ENCODE measurements at regions of chr14 and their contacts with region 1.

Region 1: DNA sequence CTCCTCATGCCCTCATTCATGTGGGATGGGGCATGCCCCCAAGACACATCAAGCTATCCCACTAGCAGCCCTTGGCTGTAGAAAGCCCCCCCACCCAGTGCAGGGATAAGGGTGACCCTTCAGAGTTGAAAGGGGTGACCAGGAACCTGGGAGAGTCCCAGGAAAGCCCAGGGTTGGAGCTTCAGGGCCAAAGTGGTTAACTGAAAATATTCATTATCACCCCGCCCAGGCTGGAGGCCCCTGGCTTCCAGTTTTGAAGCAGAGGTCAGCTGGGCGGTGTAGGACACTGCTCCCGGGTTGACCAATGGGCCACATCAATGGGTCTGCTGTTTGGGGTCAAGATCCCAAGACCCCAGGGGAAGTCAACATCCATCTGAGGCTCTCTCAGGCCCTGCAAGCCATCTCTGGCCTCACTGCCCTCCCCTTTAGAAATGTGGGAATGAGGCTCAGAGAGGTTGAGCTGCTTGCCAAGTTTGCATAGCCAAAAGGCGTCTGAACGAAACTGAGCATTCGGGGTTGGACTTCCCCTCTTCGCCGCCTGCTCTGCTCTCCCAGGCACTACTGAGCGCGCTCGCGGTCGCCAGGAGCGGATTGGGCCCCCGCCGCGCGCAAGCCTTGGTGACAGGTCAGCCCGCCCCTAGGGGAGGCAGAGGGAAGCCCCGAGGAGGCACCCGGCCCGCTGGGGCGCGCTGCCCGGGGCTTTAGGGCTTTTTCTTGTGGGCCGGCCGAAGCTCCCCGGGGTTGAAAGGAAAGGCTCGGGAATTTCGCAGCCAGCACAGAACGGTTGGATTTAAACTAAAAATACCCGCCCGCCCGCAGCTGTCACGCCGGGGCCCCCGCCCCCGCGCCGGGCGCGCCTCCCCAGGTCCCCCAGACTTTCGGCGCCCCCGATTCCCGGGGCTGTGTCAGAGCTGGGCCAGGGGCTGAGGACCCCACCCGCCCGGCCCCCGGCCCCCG is 576 bp downstream of the SYNE3 start:
- DNase-seq: peak; percentile 93
- H3K4me3 Mint-ChIP-seq: peak overlapping the region; percentile 80
- H3K27ac Mint-ChIP-seq: peak overlapping the region; percentile 79
- H3K4me1 Mint-ChIP-seq: peaks cover 61% of the 10 kb centered on the region
- H3K27me3 Mint-ChIP-seq: no peaks in the 10 kb centered on the region

Region 2: GRCh38 chr14:95265106-95266094 is 250.5 kb before region 1 on chr14:
- CTCF ChIA-PET with region 1: no interaction called
- intact Hi-C with region 1: loop called (anchors 1 kb)
- DNase-seq: peak; percentile 79
- H3K4me3 Mint-ChIP-seq: no peak overlapping the region
- H3K27ac Mint-ChIP-seq: peak overlapping the region; percentile 56
- H3K4me1 Mint-ChIP-seq: peaks cover 36% of the 10 kb centered on the region
- H3K27me3 Mint-ChIP-seq: no peaks in the 10 kb centered on the region

Region 3: GRCh38 chr14:95442633-95443021 is 73.2 kb before region 1 on chr14:
- CTCF ChIA-PET with region 1: interaction called, 16 read pairs
- intact Hi-C with region 1: no loop called
- DNase-seq: peak; percentile 88
- H3K4me3 Mint-ChIP-seq: no peak overlapping the region
- H3K27ac Mint-ChIP-seq: peak overlapping the region; percentile 20
- H3K4me1 Mint-ChIP-seq: peaks cover 7% of the 10 kb centered on the region
- H3K27me3 Mint-ChIP-seq: no peaks in the 10 kb centered on the region

Region 4: DNA sequence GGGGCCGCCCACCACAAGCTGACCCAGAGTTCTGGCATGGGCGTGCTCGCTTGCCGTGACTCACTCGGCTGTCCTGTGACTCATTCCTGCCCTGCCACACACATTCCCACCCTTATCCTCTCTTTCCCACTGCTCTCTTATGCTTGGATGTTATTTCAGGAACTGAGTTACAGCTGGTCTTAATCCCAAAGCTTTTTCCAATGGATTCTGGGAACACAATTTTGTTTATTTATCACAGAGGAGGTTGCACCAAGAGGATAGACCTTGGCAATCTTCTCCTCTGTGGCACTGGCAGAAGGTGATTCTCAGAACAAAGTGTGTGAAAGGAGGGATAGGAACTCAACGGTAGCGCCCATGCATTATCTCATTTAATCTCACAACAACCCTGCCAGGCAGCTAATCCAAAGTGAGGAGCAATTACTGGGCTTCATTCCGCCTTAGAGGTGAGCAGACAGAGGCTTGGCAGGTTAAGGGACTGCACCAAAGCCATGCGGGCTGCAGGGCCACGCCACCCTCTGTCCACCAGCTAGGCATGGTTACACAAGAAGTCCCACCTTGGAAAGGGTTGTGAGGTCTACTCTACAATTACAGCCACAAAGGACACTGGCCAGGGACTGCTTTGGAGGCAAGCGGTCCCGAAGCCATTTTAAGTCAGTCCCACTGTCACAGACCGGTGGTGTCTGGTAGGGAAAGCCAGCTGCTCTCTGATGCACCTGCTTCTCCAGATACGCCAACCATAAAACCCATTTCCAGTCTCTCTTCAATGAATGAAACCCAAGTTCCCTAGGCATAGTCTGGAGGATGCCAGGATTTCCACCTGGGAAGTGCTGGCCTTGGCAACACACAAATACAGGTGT is 32.3 kb before region 1 on chr14:
- CTCF ChIA-PET with region 1: no interaction called
- intact Hi-C with region 1: loop called (anchors 5 kb)
- DNase-seq: no peak
- H3K4me3 Mint-ChIP-seq: no peak overlapping the region
- H3K27ac Mint-ChIP-seq: no peak overlapping the region
- H3K4me1 Mint-ChIP-seq: peaks cover 45% of the 10 kb centered on the region
- H3K27me3 Mint-ChIP-seq: no peaks in the 10 kb centered on the region

Region 5: GRCh38 chr14:95495538-95496025 is 20.3 kb before region 1 on chr14:
- CTCF ChIA-PET with region 1: interaction called, 4 read pairs
- intact Hi-C with region 1: loop called (anchors 1 kb)
- DNase-seq: peak; percentile 66
- H3K4me3 Mint-ChIP-seq: no peak overlapping the region
- H3K27ac Mint-ChIP-seq: peak overlapping the region; percentile 56
- H3K4me1 Mint-ChIP-seq: peaks cover 52% of the 10 kb centered on the region
- H3K27me3 Mint-ChIP-seq: no peaks in the 10 kb centered on the region

Region 6: GRCh38 chr14:95534299-95535225 is 18.7 kb after region 1 on chr14 and contains the start of gene GLRX5:
- CTCF ChIA-PET with region 1: interaction called, 11 read pairs
- intact Hi-C with region 1: loop called (anchors 1 kb)
- DNase-seq: peak; percentile 99
- H3K4me3 Mint-ChIP-seq: peak within 1 kb of the TSS; percentile 92
- H3K27ac Mint-ChIP-seq: peak within 1 kb of the TSS; percentile 82
- H3K4me1 Mint-ChIP-seq: peaks cover 61% of the 10 kb centered on the region
- H3K27me3 Mint-ChIP-seq: no peaks in the 10 kb centered on the region
- total RNA-seq, gene GLRX5: 34.2 to 34.6 TPM

Region 7: GRCh38 chr14:95649230-95649629 is 133.4 kb after region 1 on chr14:
- CTCF ChIA-PET with region 1: no interaction called
- intact Hi-C with region 1: no loop called
- DNase-seq: no peak
- H3K4me3 Mint-ChIP-seq: no peak overlapping the region
- H3K27ac Mint-ChIP-seq: no peak overlapping the region
- H3K4me1 Mint-ChIP-seq: peaks cover 9% of the 10 kb centered on the region
- H3K27me3 Mint-ChIP-seq: peaks cover 10% of the 10 kb centered on the region

Region 8: DNA sequence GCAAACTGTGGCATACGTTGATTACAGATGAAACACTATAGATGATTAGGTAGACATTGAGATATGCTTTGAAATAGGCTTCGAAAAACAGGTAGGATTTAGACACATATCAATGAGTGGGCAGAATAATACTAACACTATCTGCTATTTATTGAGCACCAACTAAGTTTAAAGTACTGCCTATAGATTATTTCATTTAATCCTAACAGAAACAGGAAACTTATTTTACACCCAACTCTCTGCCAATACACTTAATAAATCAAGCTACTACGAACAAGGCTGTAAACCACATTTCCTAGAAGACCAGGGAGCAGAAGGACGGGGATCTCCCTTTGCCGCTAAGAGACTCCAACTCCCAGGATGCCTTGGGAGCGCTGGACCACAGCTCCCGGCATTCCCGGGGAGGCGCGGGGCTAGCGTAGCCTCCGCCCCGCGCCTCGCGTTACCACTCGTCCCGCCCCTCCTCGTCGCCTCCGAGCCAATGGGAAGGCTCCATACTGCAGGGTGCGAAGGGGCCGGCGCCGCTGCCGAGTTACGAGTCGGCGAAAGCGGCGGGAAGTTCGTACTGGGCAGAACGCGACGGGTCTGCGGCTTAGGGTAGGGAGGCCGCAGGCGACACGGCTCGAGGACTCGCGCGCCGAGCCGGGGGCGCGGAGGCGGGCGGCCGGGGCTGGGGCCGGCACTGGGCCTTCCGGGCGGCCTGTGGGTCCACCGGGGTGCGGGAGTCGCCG is 1281.1 kb after region 1 on chr14 and contains the start of gene VRK1:
- CTCF ChIA-PET with region 1: no interaction called
- intact Hi-C with region 1: loop called (anchors 5 kb)
- DNase-seq: peak; percentile 96
- H3K4me3 Mint-ChIP-seq: peak within 1 kb of the TSS; percentile 92
- H3K27ac Mint-ChIP-seq: peak within 1 kb of the TSS; percentile 84
- H3K4me1 Mint-ChIP-seq: peaks cover 20% of the 10 kb centered on the region
- H3K27me3 Mint-ChIP-seq: no peaks in the 10 kb centered on the region
- total RNA-seq, gene VRK1: 64.9 to 74.3 TPM